B cell (primary cell): ENCODE measurements at regions of chr17 and their contacts with region 1.

Region 1: DNA sequence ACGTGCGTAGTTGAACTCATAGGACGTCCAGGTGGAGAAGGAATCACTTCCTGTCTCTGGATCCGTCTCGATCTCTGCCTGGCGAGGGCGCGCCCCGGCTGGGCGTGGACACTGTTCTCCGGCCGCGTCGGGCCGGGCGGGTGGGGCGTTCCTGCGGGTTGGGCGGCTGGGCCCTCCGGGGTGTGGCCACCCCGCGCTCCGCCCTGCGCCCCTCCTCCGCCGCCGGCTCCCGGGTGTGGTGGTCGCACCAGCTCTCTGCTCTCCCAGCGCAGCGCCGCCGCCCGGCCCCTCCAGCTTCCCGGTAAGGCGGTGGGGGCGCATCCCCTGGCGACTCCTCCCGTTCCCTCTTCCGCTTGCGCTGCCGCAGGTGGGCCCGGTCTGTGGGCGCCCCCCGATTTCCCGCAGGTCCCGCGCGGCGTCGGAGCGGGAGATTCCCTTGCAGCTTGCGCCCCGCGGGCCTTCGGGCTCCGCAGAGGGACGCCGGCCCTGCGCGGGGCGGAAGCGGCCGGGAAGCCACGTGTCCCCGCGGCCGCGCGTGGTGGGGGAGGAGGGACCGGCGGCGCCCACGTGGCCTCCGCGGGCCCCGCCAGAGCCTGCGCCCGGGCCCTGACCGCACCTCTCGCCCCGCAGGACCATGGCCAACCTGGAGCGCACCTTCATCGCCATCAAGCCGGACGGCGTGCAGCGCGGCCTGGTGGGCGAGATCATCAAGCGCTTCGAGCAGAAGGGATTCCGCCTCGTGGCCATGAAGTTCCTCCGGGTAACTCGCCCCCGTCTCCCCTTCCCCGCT is at the start of gene NME2:
- DNase-seq: peak; percentile 83
- ATAC-seq: peak; percentile 87
- H3K4me3 ChIP-seq: peak within 1 kb of the TSS; percentile 57 to 83 (median 74)
- H3K4me3 Mint-ChIP-seq: peak within 1 kb of the TSS; percentile 97
- H3K27ac ChIP-seq: peak within 1 kb of the TSS; percentile 56 to 77
- H3K27ac Mint-ChIP-seq: peak within 1 kb of the TSS; percentile 99
- H3K4me1 ChIP-seq: peaks cover 9 to 22% of the 10 kb centered on the region in 2 donors
- H3K4me1 Mint-ChIP-seq: peaks cover 16% of the 10 kb centered on the region
- H3K27me3 ChIP-seq: no peaks in the 10 kb centered on the region
- H3K27me3 Mint-ChIP-seq: no peaks in the 10 kb centered on the region
- CTCF ChIP-seq: no peak
- total RNA-seq, gene NME2: 154 and 169 TPM in 2 replicates

Region 2: GRCh38 chr17:50425682-50426471 is 740.5 kb before region 1 on chr17 and contains the start of gene ACSF2:
- CTCF ChIA-PET with region 1: no interaction called
- POLR2A ChIA-PET with region 1: interaction called, 10 read pairs
- intact Hi-C with region 1: no loop called
- DNase-seq: peak; percentile 79
- ATAC-seq: peak; percentile 81
- H3K4me3 ChIP-seq: peak within 1 kb of the TSS; percentile 32 to 82 (median 70)
- H3K4me3 Mint-ChIP-seq: peak within 1 kb of the TSS; percentile 94
- H3K27ac ChIP-seq: peak within 1 kb of the TSS; percentile 41 to 46
- H3K27ac Mint-ChIP-seq: peak within 1 kb of the TSS; percentile 93
- H3K4me1 ChIP-seq: peaks cover 27 to 41% of the 10 kb centered on the region in 2 donors
- H3K4me1 Mint-ChIP-seq: peaks cover 51% of the 10 kb centered on the region
- H3K27me3 ChIP-seq: no peaks in the 10 kb centered on the region
- H3K27me3 Mint-ChIP-seq: no peaks in the 10 kb centered on the region
- CTCF ChIP-seq: no peak
- total RNA-seq, gene ACSF2: 66.1 and 82.6 TPM in 2 replicates

Region 3: DNA sequence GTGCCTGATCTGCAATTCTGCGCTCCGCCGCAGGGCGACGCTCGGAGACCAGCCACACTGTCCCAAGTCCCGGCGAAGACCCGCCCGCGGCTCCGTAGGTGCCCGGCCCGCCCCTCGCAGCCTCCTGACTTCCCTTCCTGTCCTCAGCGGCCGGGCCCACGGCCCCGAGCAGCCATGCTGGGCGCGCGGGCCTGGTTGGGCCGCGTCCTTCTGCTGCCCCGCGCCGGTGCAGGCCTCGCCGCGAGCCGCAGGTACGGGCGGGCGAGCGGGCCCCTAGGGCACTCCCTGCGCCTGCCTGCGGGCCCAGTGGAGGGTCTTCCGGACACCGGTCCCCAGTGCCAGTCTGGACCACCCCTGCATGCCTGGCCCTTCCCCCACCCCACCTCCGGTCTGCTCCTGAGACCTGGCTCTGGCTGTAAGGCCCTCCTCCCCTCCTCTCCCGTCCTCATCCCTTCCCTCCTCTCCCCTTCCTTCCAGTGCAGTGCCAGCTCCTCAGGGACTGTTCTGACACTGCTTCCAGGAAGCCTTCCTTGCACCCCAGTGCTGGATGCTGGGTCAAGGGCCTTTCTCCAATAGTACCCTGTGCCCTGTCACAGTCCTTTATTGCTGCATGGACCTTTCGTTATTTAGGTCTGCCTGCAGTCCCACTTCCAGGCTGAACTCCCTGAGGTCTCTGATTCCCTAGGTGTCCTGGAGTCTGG is 619.2 kb before region 1 on chr17 and contains the start of gene SPATA20:
- CTCF ChIA-PET with region 1: no interaction called
- POLR2A ChIA-PET with region 1: no interaction called
- intact Hi-C with region 1: loop called (anchors 5 kb)
- DNase-seq: peak; percentile 92
- ATAC-seq: peak; percentile 87
- H3K4me3 ChIP-seq: peak within 1 kb of the TSS in 4 of 5 experiments; percentile 20 to 62 (median 52)
- H3K4me3 Mint-ChIP-seq: peak within 1 kb of the TSS; percentile 84
- H3K27ac ChIP-seq: peak within 1 kb of the TSS in 1 of 2 donors; percentile 40
- H3K27ac Mint-ChIP-seq: peak within 1 kb of the TSS; percentile 78
- H3K4me1 ChIP-seq: peaks cover 14 to 21% of the 10 kb centered on the region in 2 donors
- H3K4me1 Mint-ChIP-seq: peaks cover 19% of the 10 kb centered on the region
- H3K27me3 ChIP-seq: peaks cover 0 to 11% (median 5%) of the 10 kb centered on the region in 4 experiments
- H3K27me3 Mint-ChIP-seq: peaks cover 7% of the 10 kb centered on the region
- CTCF ChIP-seq: peak; percentile 98
- total RNA-seq, gene SPATA20: 68.5 and 72.2 TPM in 2 replicates

Region 4: GRCh38 chr17:50707289-50708049 is 458.9 kb before region 1 on chr17 and contains the start of gene ANKRD40:
- CTCF ChIA-PET with region 1: no interaction called
- POLR2A ChIA-PET with region 1: no interaction called
- intact Hi-C with region 1: loop called (anchors 5 kb)
- DNase-seq: peak; percentile 95
- ATAC-seq: peak; percentile 78
- H3K4me3 ChIP-seq: peak within 1 kb of the TSS; percentile 57 to 87 (median 80)
- H3K4me3 Mint-ChIP-seq: peak within 1 kb of the TSS; percentile 96
- H3K27ac ChIP-seq: peak within 1 kb of the TSS; percentile 92 to 99
- H3K27ac Mint-ChIP-seq: peak within 1 kb of the TSS; percentile 97
- H3K4me1 ChIP-seq: peaks cover 25 to 30% of the 10 kb centered on the region in 2 donors
- H3K4me1 Mint-ChIP-seq: peaks cover 43% of the 10 kb centered on the region
- H3K27me3 ChIP-seq: no peaks in the 10 kb centered on the region
- H3K27me3 Mint-ChIP-seq: no peaks in the 10 kb centered on the region
- CTCF ChIP-seq: no peak
- total RNA-seq, gene ANKRD40: 35.3 and 43.1 TPM in 2 replicates

Region 5: GRCh38 chr17:50883850-50884438 is 282.4 kb before region 1 on chr17:
- CTCF ChIA-PET with region 1: no interaction called
- POLR2A ChIA-PET with region 1: no interaction called
- intact Hi-C with region 1: no loop called
- DNase-seq: peak; percentile 58
- ATAC-seq: peak; percentile 85
- H3K4me3 ChIP-seq: no peak overlapping the region
- H3K4me3 Mint-ChIP-seq: no peak overlapping the region
- H3K27ac ChIP-seq: no peak overlapping the region
- H3K27ac Mint-ChIP-seq: peak overlapping the region; percentile 61
- H3K4me1 ChIP-seq: peaks cover 8 to 11% of the 10 kb centered on the region in 2 donors
- H3K4me1 Mint-ChIP-seq: peaks cover 13% of the 10 kb centered on the region
- H3K27me3 ChIP-seq: no peaks in the 10 kb centered on the region
- H3K27me3 Mint-ChIP-seq: no peaks in the 10 kb centered on the region
- CTCF ChIP-seq: no peak

Region 6: GRCh38 chr17:51120739-51121617 is 45.4 kb before region 1 on chr17 and contains the start of gene SPAG9:
- CTCF ChIA-PET with region 1: no interaction called
- POLR2A ChIA-PET with region 1: interaction called, 4 read pairs
- intact Hi-C with region 1: loop called (anchors 5 kb)
- DNase-seq: peak; percentile 96
- ATAC-seq: peak; percentile 84
- H3K4me3 ChIP-seq: peak within 1 kb of the TSS; percentile 74 to 98 (median 89)
- H3K4me3 Mint-ChIP-seq: peak within 1 kb of the TSS; percentile 98
- H3K27ac ChIP-seq: peak within 1 kb of the TSS; percentile 93 to 94
- H3K27ac Mint-ChIP-seq: peak within 1 kb of the TSS; percentile 99
- H3K4me1 ChIP-seq: peaks cover 33 to 35% of the 10 kb centered on the region in 2 donors
- H3K4me1 Mint-ChIP-seq: peaks cover 49% of the 10 kb centered on the region
- H3K27me3 ChIP-seq: no peaks in the 10 kb centered on the region
- H3K27me3 Mint-ChIP-seq: no peaks in the 10 kb centered on the region
- CTCF ChIP-seq: no peak
- total RNA-seq, gene SPAG9: 64.1 and 69.3 TPM in 2 replicates

Region 7: GRCh38 chr17:51260125-51260880 is 93.9 kb after region 1 on chr17 and contains the start of gene UTP18:
- CTCF ChIA-PET with region 1: no interaction called
- POLR2A ChIA-PET with region 1: interaction called, 3 read pairs
- intact Hi-C with region 1: loop called (anchors 1 kb)
- DNase-seq: peak; percentile 99
- ATAC-seq: peak; percentile 85
- H3K4me3 ChIP-seq: peak within 1 kb of the TSS; percentile 86 to 97 (median 92)
- H3K4me3 Mint-ChIP-seq: peak within 1 kb of the TSS; percentile 98
- H3K27ac ChIP-seq: peak within 1 kb of the TSS; percentile 96 to 98
- H3K27ac Mint-ChIP-seq: peak within 1 kb of the TSS; percentile 99
- H3K4me1 ChIP-seq: peaks cover 26 to 36% of the 10 kb centered on the region in 2 donors
- H3K4me1 Mint-ChIP-seq: peaks cover 54% of the 10 kb centered on the region
- H3K27me3 ChIP-seq: no peaks in the 10 kb centered on the region
- H3K27me3 Mint-ChIP-seq: no peaks in the 10 kb centered on the region
- CTCF ChIP-seq: no peak
- total RNA-seq, gene UTP18: 34.2 and 37.7 TPM in 2 replicates